Activated CD8-positive, alpha-beta memory T cell treated with anti-CD3 and anti-CD28 coated beads, Interleukin-2, amount 10 ng/mL, durations not matched to agents 7 days and 5 days (primary cell): ENCODE measurements at regions of chr14 and their contacts with region 1.

Region 1: GRCh38 chr14:22556990-22557623 is 31.9 kb downstream of the DAD1 start:
- DNase-seq: peak; percentile 95
- ATAC-seq: peak; percentile 34
- H3K4me3 Mint-ChIP-seq: peak overlapping the region; percentile 68
- H3K27ac Mint-ChIP-seq: peak overlapping the region; percentile 94
- H3K4me1 Mint-ChIP-seq: peaks cover 91% of the 10 kb centered on the region
- H3K27me3 Mint-ChIP-seq: peaks cover 3% of the 10 kb centered on the region

Region 2: GRCh38 chr14:21734457-21735074 is 822.5 kb before region 1 on chr14:
- CTCF ChIA-PET with region 1: interaction called, 11 read pairs
- DNase-seq: peak; percentile 59
- ATAC-seq: peak; percentile 53
- H3K4me3 Mint-ChIP-seq: peak overlapping the region; percentile 64
- H3K27ac Mint-ChIP-seq: peak overlapping the region; percentile 64
- H3K4me1 Mint-ChIP-seq: peaks cover 10% of the 10 kb centered on the region
- H3K27me3 Mint-ChIP-seq: peaks cover 60% of the 10 kb centered on the region

Region 3: GRCh38 chr14:21990116-21990515 is 567.0 kb before region 1 on chr14:
- CTCF ChIA-PET with region 1: interaction called, 11 read pairs
- DNase-seq: no peak
- ATAC-seq: peak; percentile 32
- H3K4me3 Mint-ChIP-seq: peak overlapping the region; percentile 58
- H3K27ac Mint-ChIP-seq: peak overlapping the region; percentile 65
- H3K4me1 Mint-ChIP-seq: peaks cover 34% of the 10 kb centered on the region
- H3K27me3 Mint-ChIP-seq: peaks cover 4% of the 10 kb centered on the region

Region 4: GRCh38 chr14:21997300-21997699 is 559.8 kb before region 1 on chr14:
- CTCF ChIA-PET with region 1: interaction called, 14 read pairs
- DNase-seq: peak; percentile 67
- ATAC-seq: peak; percentile 88
- H3K4me3 Mint-ChIP-seq: peak overlapping the region; percentile 93
- H3K27ac Mint-ChIP-seq: peak overlapping the region; percentile 97
- H3K4me1 Mint-ChIP-seq: peaks cover 29% of the 10 kb centered on the region
- H3K27me3 Mint-ChIP-seq: no peaks in the 10 kb centered on the region

Region 5: DNA sequence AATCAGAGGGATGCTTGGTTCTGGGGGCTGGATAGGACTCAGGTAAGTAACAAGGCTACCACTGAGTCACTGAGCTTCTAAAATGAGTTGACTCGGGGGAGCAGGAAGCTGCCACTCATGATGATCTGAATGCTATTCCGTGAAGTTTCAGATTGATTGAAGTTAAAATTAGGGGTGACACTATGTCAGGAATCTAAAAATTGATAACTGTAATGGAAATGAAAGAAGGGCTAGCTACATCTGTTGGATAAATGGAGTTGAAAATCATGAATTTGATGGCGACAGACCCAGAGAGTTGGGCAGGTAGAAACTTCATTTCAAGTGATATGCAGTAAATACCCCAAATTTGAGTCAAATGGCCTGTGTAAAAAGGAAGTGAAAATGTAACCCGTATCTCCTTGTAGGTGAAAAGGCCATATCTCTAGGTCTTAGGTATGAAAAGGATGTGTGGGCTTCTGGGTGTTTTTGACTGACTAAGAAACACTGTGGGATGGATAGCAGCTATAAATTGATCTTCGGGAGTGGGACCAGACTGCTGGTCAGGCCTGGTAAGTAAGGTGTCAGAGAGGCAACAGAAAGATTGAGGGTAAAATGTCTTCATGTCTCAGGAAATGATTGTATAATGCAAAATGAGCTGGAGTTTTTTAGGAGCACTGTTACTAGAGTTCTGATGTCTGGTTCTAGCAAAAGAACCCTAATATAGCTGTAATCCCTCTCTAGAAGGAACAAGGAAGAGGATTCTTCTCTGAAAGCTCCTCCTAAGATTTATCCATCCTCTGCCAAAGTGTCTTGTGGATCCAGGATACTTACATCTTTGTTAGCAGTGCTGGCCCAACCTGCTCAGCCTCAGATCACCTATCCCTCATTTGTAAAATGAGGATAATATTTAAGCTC is 25.4 kb before region 1 on chr14:
- CTCF ChIA-PET with region 1: interaction called, 25 read pairs
- DNase-seq: peak; percentile 62
- ATAC-seq: peak; percentile 50
- H3K4me3 Mint-ChIP-seq: peak overlapping the region; percentile 73
- H3K27ac Mint-ChIP-seq: peak overlapping the region; percentile 91
- H3K4me1 Mint-ChIP-seq: peaks cover 90% of the 10 kb centered on the region
- H3K27me3 Mint-ChIP-seq: no peaks in the 10 kb centered on the region

Region 6: GRCh38 chr14:22536853-22537338 is 20.2 kb before region 1 on chr14:
- CTCF ChIA-PET with region 1: interaction called, 25 read pairs
- DNase-seq: peak; percentile 94
- ATAC-seq: peak; percentile 90
- H3K4me3 Mint-ChIP-seq: peak overlapping the region; percentile 73
- H3K27ac Mint-ChIP-seq: peak overlapping the region; percentile 99
- H3K4me1 Mint-ChIP-seq: peaks cover 96% of the 10 kb centered on the region
- H3K27me3 Mint-ChIP-seq: no peaks in the 10 kb centered on the region

Region 7: GRCh38 chr14:22589096-22589839 is 32.2 kb after region 1 on chr14 and contains the start of gene DAD1:
- CTCF ChIA-PET with region 1: interaction called, 30 read pairs
- DNase-seq: peak; percentile 100
- ATAC-seq: peak; percentile 90
- H3K4me3 Mint-ChIP-seq: peak within 1 kb of the TSS; percentile 86
- H3K27ac Mint-ChIP-seq: peak within 1 kb of the TSS; percentile 100
- H3K4me1 Mint-ChIP-seq: peaks cover 56% of the 10 kb centered on the region
- H3K27me3 Mint-ChIP-seq: peaks cover 2% of the 10 kb centered on the region
- total RNA-seq, gene DAD1: 115 to 185 TPM